Caco-2 (cell line): ENCODE measurements at regions of chr7 and their contacts with region 1.

Region 1: GRCh38 chr7:151519765-151520418 is at the start of gene RHEB:
- DNase-seq: peak; percentile 99
- H3K4me3 ChIP-seq: peak within 1 kb of the TSS; percentile 70
- H3K4me3 Mint-ChIP-seq: peak within 1 kb of the TSS; percentile 91
- H3K27ac Mint-ChIP-seq: peak within 1 kb of the TSS; percentile 99
- H3K4me1 ChIP-seq: peaks cover 4% of the 10 kb centered on the region; the same call in 1 of the 2 replicates
- H3K4me1 Mint-ChIP-seq: peaks cover 24% of the 10 kb centered on the region
- H3K27me3 ChIP-seq: no peaks in the 10 kb centered on the region
- H3K27me3 Mint-ChIP-seq: no peaks in the 10 kb centered on the region
- CTCF ChIP-seq: no peak
- total RNA-seq, gene RHEB: 156 and 159 TPM in 2 replicates

Region 2: GRCh38 chr7:151336027-151336708 is 183.7 kb before region 1 on chr7:
- CTCF ChIA-PET with region 1: no interaction called
- POLR2A ChIA-PET with region 1: interaction called, 11 read pairs
- intact Hi-C with region 1: no loop called
- DNase-seq: no peak
- H3K4me3 ChIP-seq: no peak overlapping the region
- H3K4me3 Mint-ChIP-seq: no peak overlapping the region
- H3K27ac Mint-ChIP-seq: no peak overlapping the region
- H3K4me1 ChIP-seq: no peaks in the 10 kb centered on the region
- H3K4me1 Mint-ChIP-seq: no peaks in the 10 kb centered on the region
- H3K27me3 ChIP-seq: no peaks in the 10 kb centered on the region; the same call in 1 of the 2 replicates
- H3K27me3 Mint-ChIP-seq: no peaks in the 10 kb centered on the region
- CTCF ChIP-seq: no peak

Region 3: GRCh38 chr7:151459726-151460473 is 60.0 kb before region 1 on chr7:
- CTCF ChIA-PET with region 1: interaction called, 4 read pairs
- POLR2A ChIA-PET with region 1: interaction called, 21 read pairs
- intact Hi-C with region 1: loop called (anchors 1 kb)
- DNase-seq: peak; percentile 90 to 97
- H3K4me3 ChIP-seq: peak overlapping the region; percentile 25
- H3K4me3 Mint-ChIP-seq: peak overlapping the region; percentile 78
- H3K27ac Mint-ChIP-seq: peak overlapping the region; percentile 96
- H3K4me1 ChIP-seq: peaks cover 24% of the 10 kb centered on the region
- H3K4me1 Mint-ChIP-seq: peaks cover 19% of the 10 kb centered on the region
- H3K27me3 ChIP-seq: no peaks in the 10 kb centered on the region
- H3K27me3 Mint-ChIP-seq: no peaks in the 10 kb centered on the region
- CTCF ChIP-seq: peak in 1 of 2 experiments; percentile 60

Region 4: GRCh38 chr7:151539088-151539671 is 19.3 kb after region 1 on chr7:
- CTCF ChIA-PET with region 1: interaction called, 3 read pairs
- POLR2A ChIA-PET with region 1: interaction called, 7 read pairs
- intact Hi-C with region 1: loop called (anchors 2 kb)
- DNase-seq: peak; percentile 30 to 53
- H3K4me3 ChIP-seq: no peak overlapping the region
- H3K4me3 Mint-ChIP-seq: no peak overlapping the region
- H3K27ac Mint-ChIP-seq: no peak overlapping the region
- H3K4me1 ChIP-seq: no peaks in the 10 kb centered on the region
- H3K4me1 Mint-ChIP-seq: no peaks in the 10 kb centered on the region
- H3K27me3 ChIP-seq: no peaks in the 10 kb centered on the region
- H3K27me3 Mint-ChIP-seq: no peaks in the 10 kb centered on the region
- CTCF ChIP-seq: no peak

Region 5: DNA sequence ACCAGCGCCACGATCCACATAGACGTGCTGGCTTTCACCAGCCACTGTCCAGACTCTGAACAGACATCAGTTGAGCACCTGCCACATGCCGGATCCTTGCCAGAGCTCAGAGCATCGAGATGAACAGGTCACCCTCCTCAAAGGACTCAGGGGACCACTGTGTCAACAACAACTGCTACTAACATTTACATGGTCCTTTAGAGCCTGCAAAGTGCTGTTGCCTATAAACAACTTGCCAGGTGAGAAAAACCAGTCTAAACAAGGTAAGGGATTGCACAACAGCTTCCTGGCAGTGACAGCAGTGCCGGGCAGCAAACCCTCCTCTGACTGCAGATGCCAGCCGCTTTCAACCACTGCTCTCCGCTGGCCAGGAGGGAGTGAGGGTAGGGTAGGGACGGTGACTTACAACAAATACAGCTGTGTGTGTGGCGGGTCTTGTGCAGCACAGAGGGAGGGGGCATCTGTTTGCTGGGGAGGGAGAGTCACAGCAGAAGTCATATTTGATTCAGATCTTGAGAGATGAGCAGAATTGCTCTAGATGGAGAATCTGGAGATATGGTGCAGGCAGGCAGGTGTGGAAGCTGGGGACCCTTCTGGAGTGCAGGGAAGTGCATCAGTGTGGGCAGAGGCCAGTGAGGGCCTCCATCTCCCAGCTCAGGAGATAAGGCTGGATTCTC is 32.6 kb after region 1 on chr7:
- CTCF ChIA-PET with region 1: no interaction called
- POLR2A ChIA-PET with region 1: no interaction called
- intact Hi-C with region 1: no loop called
- DNase-seq: peak in 1 of 2 experiments; percentile 32
- H3K4me3 ChIP-seq: no peak overlapping the region
- H3K4me3 Mint-ChIP-seq: no peak overlapping the region
- H3K27ac Mint-ChIP-seq: no peak overlapping the region
- H3K4me1 ChIP-seq: 0 out of 2 replicates have a peak, but pooled peaks cover 6% of the 10 kb centered on the region
- H3K4me1 Mint-ChIP-seq: peaks cover 16% of the 10 kb centered on the region
- H3K27me3 ChIP-seq: no peaks in the 10 kb centered on the region
- H3K27me3 Mint-ChIP-seq: no peaks in the 10 kb centered on the region
- CTCF ChIP-seq: no peak

Region 6: DNA sequence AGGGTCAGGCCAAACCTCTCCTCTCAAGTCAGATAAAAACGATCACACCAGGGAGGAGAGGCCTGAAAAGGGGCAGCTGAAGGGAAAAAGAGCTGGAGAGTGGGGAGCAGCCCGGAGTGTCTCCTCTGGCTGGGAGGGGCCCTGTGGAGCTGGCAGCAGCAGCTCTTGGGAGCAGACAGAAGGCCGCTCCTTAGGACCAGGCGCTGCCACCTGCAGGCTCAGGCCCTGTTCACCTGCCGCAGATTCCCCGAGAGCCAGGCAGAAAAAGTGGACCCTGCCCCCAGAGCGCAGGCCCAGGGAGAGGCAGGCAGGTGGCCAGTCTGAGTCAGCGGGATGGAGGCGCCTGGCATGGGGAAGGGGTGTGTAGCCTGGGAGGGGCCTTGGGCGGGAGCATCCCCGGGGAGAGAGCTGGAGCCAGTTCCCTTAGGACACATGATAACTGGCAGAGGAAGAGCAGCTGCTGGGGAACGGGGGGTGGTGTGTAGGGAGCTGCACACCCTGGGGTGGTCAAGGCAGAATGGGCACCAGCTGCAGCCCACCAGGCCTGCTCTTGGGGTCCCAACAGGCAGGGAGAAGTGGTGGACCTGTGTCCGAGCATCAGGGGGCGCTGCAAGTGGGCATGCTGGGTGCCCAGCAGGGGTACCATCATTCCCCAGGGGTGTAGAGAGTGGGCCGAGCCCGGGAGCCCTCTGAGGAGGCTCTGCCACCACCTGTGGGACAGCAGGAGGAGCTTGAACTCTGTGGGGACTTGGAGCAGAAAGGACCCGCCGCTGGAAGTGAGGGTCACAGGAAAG is 177.0 kb after region 1 on chr7:
- CTCF ChIA-PET with region 1: no interaction called
- POLR2A ChIA-PET with region 1: no interaction called
- intact Hi-C with region 1: loop called (anchors 5 kb)
- DNase-seq: peak; percentile 90 to 92
- H3K4me3 ChIP-seq: no peak overlapping the region
- H3K4me3 Mint-ChIP-seq: no peak overlapping the region
- H3K27ac Mint-ChIP-seq: peak overlapping the region; percentile 53
- H3K4me1 ChIP-seq: peaks cover 38% of the 10 kb centered on the region
- H3K4me1 Mint-ChIP-seq: peaks cover 22% of the 10 kb centered on the region
- H3K27me3 ChIP-seq: no peaks in the 10 kb centered on the region
- H3K27me3 Mint-ChIP-seq: no peaks in the 10 kb centered on the region
- CTCF ChIP-seq: peak; percentile 22 to 66